GM23248 (cell line): ENCODE measurements at regions of chr15 and their contacts with region 1.

Region 1: DNA sequence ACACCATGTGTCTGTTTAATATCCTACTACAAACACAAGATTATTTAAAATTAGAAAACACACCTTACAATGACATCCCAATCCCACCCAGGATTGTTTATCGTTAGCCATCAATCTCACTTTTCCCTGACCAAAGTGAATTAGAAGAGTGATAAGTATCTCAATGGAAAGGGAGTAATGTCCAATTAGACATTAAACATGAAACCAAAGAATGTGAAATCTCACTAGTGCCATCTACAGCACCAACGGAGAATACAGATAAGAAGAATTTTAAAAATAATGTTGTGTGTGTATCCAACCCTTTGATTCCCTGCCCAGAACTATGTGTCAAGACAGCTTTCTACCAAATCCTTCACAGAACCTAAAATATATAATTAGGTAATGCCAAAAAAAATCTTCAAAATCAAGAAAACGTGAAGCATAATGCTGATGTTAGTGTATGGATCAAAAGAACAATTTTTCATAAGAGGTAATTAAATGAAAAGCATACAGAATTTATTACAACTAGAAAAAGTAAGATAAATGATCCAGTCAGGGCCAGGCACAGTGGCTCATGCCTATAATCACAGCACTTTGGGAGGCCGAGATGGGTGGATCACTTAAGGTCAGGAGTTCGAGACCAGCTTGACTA is 64.2 kb downstream of the SCAPER start:
- DNase-seq: peak; percentile 75
- H3K4me3 ChIP-seq: no peak overlapping the region
- H3K27ac ChIP-seq: no peak overlapping the region
- H3K4me1 ChIP-seq: 0 out of 2 replicates have a peak, but pooled peaks cover 8% of the 10 kb centered on the region
- H3K27me3 ChIP-seq: no peaks in the 10 kb centered on the region

Region 2: GRCh38 chr15:76235186-76235826 is 605.6 kb before region 1 on chr15:
- in situ Hi-C with region 1: loop called (anchors 25 kb)
- DNase-seq: peak; percentile 60
- H3K4me3 ChIP-seq: no peak overlapping the region
- H3K27ac ChIP-seq: no peak overlapping the region
- H3K4me1 ChIP-seq: no peaks in the 10 kb centered on the region
- H3K27me3 ChIP-seq: no peaks in the 10 kb centered on the region